ENCODE measurements at regions of chr10 and their contacts with region 1.

Region 1: DNA sequence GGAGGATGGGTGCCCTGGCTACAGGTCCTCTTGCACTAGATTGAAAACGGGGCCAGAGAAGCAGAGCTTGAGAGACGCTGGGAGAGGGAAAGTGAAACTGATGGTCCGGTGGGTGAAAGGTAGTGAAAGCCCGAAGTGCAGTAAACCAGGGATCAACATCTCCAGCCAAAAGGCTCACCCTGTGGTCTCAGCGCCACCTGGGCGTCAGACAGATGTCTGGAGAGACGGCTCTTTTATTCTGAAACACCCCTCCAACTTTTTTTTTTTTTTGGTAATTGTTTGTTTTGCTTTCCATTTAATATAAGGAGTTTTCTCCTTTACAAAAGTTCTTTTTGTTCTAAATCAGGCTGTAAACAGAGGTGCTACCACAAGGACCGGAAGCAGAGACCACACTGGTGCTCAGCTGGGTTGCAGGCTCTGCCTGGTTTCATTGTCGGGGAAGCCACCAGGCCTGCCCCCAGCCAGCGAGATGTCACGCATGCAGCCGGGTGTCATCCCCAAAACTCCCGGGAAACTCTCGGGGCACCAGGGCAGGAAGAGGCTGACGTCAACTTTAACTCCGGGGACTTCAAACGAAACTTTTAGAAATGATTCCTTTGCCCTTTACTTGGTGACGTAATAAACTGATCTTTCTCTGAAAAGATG is 11.2 kb downstream of the IL2RA start:
- DNase-seq: peak; percentile 99
- H3K4me3 Mint-ChIP-seq: peak overlapping the region; percentile 80
- H3K27ac Mint-ChIP-seq: peak overlapping the region; percentile 98
- H3K4me1 Mint-ChIP-seq: peaks cover 85% of the 10 kb centered on the region
- H3K27me3 Mint-ChIP-seq: no peaks in the 10 kb centered on the region

Region 2: GRCh38 chr10:5629303-5630111 is 421.4 kb before region 1 on chr10:
- CTCF ChIA-PET with region 1: no interaction called
- intact Hi-C with region 1: loop called (anchors 2 kb)
- DNase-seq: peak; percentile 96
- H3K4me3 Mint-ChIP-seq: peak overlapping the region; percentile 31
- H3K27ac Mint-ChIP-seq: peak overlapping the region; percentile 73
- H3K4me1 Mint-ChIP-seq: peaks cover 29% of the 10 kb centered on the region
- H3K27me3 Mint-ChIP-seq: no peaks in the 10 kb centered on the region

Region 3: GRCh38 chr10:6036861-6037321 is 14.0 kb before region 1 on chr10:
- CTCF ChIA-PET with region 1: interaction called, 4 read pairs
- intact Hi-C with region 1: loop called (anchors 1 kb)
- DNase-seq: peak; percentile 46
- H3K4me3 Mint-ChIP-seq: peak overlapping the region; percentile 6
- H3K27ac Mint-ChIP-seq: peak overlapping the region; percentile 76
- H3K4me1 Mint-ChIP-seq: peaks cover 81% of the 10 kb centered on the region
- H3K27me3 Mint-ChIP-seq: no peaks in the 10 kb centered on the region

Region 4: GRCh38 chr10:6088721-6089390 is 37.9 kb after region 1 on chr10 and contains the start of gene RBM17:
- CTCF ChIA-PET with region 1: interaction called, 77 read pairs
- intact Hi-C with region 1: loop called (anchors 1 kb)
- DNase-seq: peak; percentile 98
- H3K4me3 Mint-ChIP-seq: peak within 1 kb of the TSS; percentile 92
- H3K27ac Mint-ChIP-seq: peak within 1 kb of the TSS; percentile 89
- H3K4me1 Mint-ChIP-seq: peaks cover 71% of the 10 kb centered on the region
- H3K27me3 Mint-ChIP-seq: no peaks in the 10 kb centered on the region
- total RNA-seq, gene RBM17: 157 to 162 TPM

Region 5: GRCh38 chr10:6269953-6270867 is 219.3 kb after region 1 on chr10:
- CTCF ChIA-PET with region 1: no interaction called
- intact Hi-C with region 1: loop called (anchors 2 kb)
- DNase-seq: peak; percentile 90
- H3K4me3 Mint-ChIP-seq: peak overlapping the region; percentile 13
- H3K27ac Mint-ChIP-seq: peak overlapping the region; percentile 93
- H3K4me1 Mint-ChIP-seq: peaks cover 50% of the 10 kb centered on the region
- H3K27me3 Mint-ChIP-seq: no peaks in the 10 kb centered on the region

Region 6: GRCh38 chr10:6593241-6593671 is 542.3 kb after region 1 on chr10:
- CTCF ChIA-PET with region 1: no interaction called
- intact Hi-C with region 1: loop called (anchors 5 kb)
- DNase-seq: peak; percentile 54
- H3K4me3 Mint-ChIP-seq: peak overlapping the region; percentile 55
- H3K27ac Mint-ChIP-seq: peak overlapping the region; percentile 96
- H3K4me1 Mint-ChIP-seq: peaks cover 89% of the 10 kb centered on the region
- H3K27me3 Mint-ChIP-seq: no peaks in the 10 kb centered on the region

Measured in activated naive CD4-positive, alpha-beta T cell treated with anti-CD3 and anti-CD28 coated beads for 36 hours (primary cell).